AG04449 (cell line): ENCODE measurements at regions of chr18 and their contacts with region 1.

Region 1: GRCh38 chr18:3129053-3129864 is 90.5 kb downstream of the MYOM1 start:
- DNase-seq: peak; percentile 10
- H3K4me3 ChIP-seq: no peak overlapping the region
- CTCF ChIP-seq: peak; percentile 97

Region 2: DNA sequence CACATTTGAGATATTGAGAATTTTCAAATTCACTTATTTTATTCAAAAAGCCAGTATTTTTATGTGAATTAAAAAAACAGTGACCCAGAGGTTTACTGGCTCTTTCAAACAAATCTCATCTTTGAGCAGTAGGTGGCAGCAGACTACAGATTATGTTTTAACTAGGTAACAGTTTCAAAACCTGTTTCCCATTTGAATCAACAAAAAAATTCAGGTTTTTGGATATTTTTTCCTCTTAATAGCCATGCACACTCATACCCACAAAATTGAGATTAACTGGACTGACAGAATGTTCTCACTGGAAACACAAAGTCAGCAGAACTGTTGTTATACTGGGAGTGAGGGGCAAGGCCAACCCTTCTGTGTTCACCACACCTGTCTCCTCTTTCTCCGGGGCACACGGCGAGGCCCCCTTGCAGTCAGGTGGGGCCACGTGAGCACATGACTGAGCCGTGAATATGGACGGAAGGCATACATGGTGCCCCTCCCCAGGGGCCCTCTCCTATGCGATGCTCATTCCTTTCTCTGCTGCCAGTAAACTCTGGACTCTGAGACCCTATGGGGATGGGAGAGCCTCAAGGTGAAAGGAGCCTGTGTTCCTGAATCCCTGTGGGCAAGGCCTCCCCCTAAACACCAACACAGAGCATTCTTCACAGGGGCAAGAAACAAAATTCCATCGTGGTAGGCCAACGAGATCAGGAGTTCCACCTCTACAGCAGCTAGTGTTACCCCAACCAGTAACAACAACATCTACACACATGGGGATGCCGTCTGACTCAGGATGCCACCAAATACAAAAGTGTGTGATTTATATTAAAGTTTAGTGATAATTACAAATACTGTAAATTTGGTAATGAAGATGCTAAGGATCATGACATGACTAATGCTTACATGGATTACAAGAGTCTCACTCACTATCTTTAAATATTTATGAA is 196.7 kb before region 1 on chr18:
- CTCF ChIA-PET with region 1: interaction called, 83 read pairs
- POLR2A ChIA-PET with region 1: no interaction called
- DNase-seq: no peak
- H3K4me3 ChIP-seq: no peak overlapping the region
- CTCF ChIP-seq: peak; percentile 46

Region 3: GRCh38 chr18:2958819-2959298 is 170.4 kb before region 1 on chr18:
- CTCF ChIA-PET with region 1: interaction called, 11 read pairs
- POLR2A ChIA-PET with region 1: no interaction called
- DNase-seq: peak; percentile 38
- H3K4me3 ChIP-seq: no peak overlapping the region
- CTCF ChIP-seq: no peak

Region 4: GRCh38 chr18:3074087-3074486 is 55.2 kb before region 1 on chr18:
- CTCF ChIA-PET with region 1: interaction called, 16 read pairs
- POLR2A ChIA-PET with region 1: no interaction called
- DNase-seq: no peak
- H3K4me3 ChIP-seq: no peak overlapping the region
- CTCF ChIP-seq: no peak

Region 5: GRCh38 chr18:3110034-3110752 is 19.1 kb before region 1 on chr18:
- CTCF ChIA-PET with region 1: interaction called, 36 read pairs
- POLR2A ChIA-PET with region 1: no interaction called
- DNase-seq: no peak
- H3K4me3 ChIP-seq: no peak overlapping the region
- CTCF ChIP-seq: no peak

Region 6: GRCh38 chr18:3151399-3152264 is 22.4 kb after region 1 on chr18:
- CTCF ChIA-PET with region 1: interaction called, 37 read pairs
- POLR2A ChIA-PET with region 1: no interaction called
- DNase-seq: no peak
- H3K4me3 ChIP-seq: no peak overlapping the region
- CTCF ChIP-seq: peak; percentile 52